ENCODE measurements at regions of chr12 and their contacts with region 1.

Region 1: GRCh38 chr12:88035271-88035906 is 6.2 kb upstream of the C12orf50 start:
- DNase-seq: peak; percentile 70 to 92 (median 81)
- ATAC-seq: peak; percentile 96
- H3K4me3 ChIP-seq: peak overlapping the region; percentile 73
- H3K4me3 Mint-ChIP-seq: peak overlapping the region; percentile 97
- H3K27ac ChIP-seq: peak overlapping the region; percentile 57 to 59
- H3K27ac Mint-ChIP-seq: peak overlapping the region; percentile 91
- H3K4me1 ChIP-seq: peaks cover 17% of the 10 kb centered on the region
- H3K4me1 Mint-ChIP-seq: peaks cover 62% of the 10 kb centered on the region
- H3K27me3 ChIP-seq: no peaks in the 10 kb centered on the region
- H3K27me3 Mint-ChIP-seq: no peaks in the 10 kb centered on the region
- CTCF ChIP-seq: no peak

Region 2: DNA sequence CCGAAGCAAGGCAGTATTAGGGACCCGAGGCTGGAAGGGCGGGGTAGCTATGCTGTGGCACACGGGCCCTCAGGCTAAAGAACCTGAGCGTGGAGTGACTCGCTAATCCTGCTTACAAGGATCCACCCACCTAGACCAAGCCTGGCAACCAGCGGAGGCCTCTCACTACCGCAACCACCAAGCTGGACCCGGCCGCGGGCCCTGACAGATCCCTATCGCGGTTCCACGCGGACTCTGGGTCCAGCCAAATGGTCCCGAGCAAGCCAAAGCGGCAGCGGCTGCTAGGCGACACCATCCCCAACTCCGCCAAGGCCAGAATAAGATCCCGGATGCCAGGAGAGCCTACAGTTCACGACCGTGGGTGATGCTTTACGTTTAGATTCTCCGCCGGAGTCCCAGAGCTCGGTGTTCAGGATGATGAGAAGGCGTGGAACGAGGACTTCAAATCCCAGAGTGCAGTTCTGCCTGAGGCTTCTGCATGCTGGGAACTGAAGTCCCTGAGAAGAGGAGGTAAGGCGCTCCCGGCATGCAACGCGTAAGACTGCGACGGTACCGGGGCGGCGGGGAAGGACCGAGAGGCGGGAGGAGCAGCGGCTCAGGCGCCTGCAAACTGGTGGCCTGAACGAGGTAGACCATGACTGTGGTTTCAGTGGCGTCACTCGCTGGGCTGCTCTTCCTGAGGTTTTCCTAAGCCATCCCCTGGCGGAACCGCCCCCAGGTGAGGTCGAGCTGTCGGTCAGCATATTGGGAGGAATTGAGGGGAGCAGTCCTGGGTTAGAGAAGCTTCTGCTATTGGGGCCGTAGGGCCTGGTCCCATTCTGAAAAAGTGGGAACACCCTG is 106.6 kb after region 1 on chr12 and contains the starts of genes CEP290 and TMTC3:
- CTCF ChIA-PET with region 1: no interaction called
- POLR2A ChIA-PET with region 1: interaction called, 16 read pairs
- intact Hi-C with region 1: loop called (anchors 1 to 2 kb)
- DNase-seq: peak; percentile 82 to 98 (median 88)
- ATAC-seq: peak; percentile 93
- H3K4me3 ChIP-seq: peak within 1 kb of the TSS; percentile 83
- H3K4me3 Mint-ChIP-seq: peak within 1 kb of the TSS; percentile 98
- H3K27ac ChIP-seq: peak within 1 kb of the TSS; percentile 82 to 84
- H3K27ac Mint-ChIP-seq: peak within 1 kb of the TSS; percentile 92
- H3K4me1 ChIP-seq: peaks cover 12% of the 10 kb centered on the region
- H3K4me1 Mint-ChIP-seq: peaks cover 69% of the 10 kb centered on the region
- H3K27me3 ChIP-seq: no peaks in the 10 kb centered on the region
- H3K27me3 Mint-ChIP-seq: no peaks in the 10 kb centered on the region
- CTCF ChIP-seq: no peak
- total RNA-seq, gene CEP290: 12.6 to 13.7 TPM
- total RNA-seq, gene TMTC3: 5.1 to 6.1 TPM

Measured in CD4-positive, alpha-beta T cell (primary cell).